PC-9 (cell line): ENCODE measurements at regions of chr15 and their contacts with region 1.

Region 1: GRCh38 chr15:78988361-78988911 is 43.6 kb upstream of the CTSH start:
- DNase-seq: peak; percentile 89 to 97
- H3K4me3 ChIP-seq: no peak overlapping the region
- H3K27ac ChIP-seq: peak overlapping the region; percentile 81
- H3K4me1 ChIP-seq: peaks cover 16% of the 10 kb centered on the region
- H3K27me3 ChIP-seq: no peaks in the 10 kb centered on the region
- CTCF ChIP-seq: no peak

Region 2: GRCh38 chr15:78909791-78910228 is 78.6 kb before region 1 on chr15:
- CTCF ChIA-PET with region 1: interaction called, 12 read pairs
- POLR2A ChIA-PET with region 1: no interaction called
- intact Hi-C with region 1: no loop called
- DNase-seq: no peak
- H3K4me3 ChIP-seq: no peak overlapping the region
- H3K27ac ChIP-seq: no peak overlapping the region
- H3K4me1 ChIP-seq: peaks cover 22% of the 10 kb centered on the region
- H3K27me3 ChIP-seq: no peaks in the 10 kb centered on the region
- CTCF ChIP-seq: peak; percentile 84

Region 3: DNA sequence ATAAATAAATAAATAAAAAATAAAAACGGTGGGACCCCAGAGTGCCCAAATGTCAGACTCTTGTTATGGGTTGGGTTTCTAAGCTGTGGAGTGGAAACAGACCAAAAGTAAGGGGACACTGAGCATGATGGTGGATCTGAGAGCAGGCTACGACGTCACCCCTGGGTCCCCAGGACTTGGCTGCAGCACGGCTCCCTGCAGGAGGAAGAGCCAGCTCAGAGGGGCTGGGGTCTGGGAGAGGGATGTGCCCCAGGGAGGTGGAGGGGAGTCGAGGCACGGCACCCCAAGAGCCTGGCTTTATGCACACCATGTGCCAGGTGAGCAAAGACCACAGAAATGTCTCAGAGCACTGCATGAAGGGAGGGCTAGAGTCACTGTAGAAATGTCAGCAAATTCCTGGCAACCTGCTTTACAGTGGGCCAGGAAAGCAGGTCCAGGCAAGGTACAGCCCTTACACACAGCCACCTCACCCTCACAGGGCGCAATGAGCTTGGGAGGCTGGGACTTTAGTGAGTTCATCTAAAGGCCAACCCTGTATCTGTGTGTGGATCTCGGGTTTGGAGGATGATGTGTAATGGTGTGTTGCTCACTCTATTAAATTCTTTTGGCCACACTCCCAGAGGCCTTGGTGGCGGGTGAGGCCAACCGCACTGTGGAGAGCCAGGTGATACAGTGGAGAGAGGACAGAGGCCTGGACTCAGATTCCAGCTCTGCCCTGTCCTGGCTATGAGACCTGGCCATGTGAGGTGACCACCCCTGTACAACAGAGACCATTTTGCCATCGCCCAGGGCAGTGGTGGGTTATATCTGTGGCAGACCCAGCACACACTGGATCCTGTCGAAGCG is 57.7 kb before region 1 on chr15:
- CTCF ChIA-PET with region 1: no interaction called
- POLR2A ChIA-PET with region 1: no interaction called
- intact Hi-C with region 1: loop called (anchors 2 kb)
- DNase-seq: peak; percentile 89 to 98
- H3K4me3 ChIP-seq: no peak overlapping the region
- H3K27ac ChIP-seq: peak overlapping the region; percentile 85
- H3K4me1 ChIP-seq: peaks cover 22% of the 10 kb centered on the region
- H3K27me3 ChIP-seq: no peaks in the 10 kb centered on the region
- CTCF ChIP-seq: no peak

Region 4: GRCh38 chr15:78944669-78945407 is 43.6 kb before region 1 on chr15 and contains the start of gene CTSH:
- CTCF ChIA-PET with region 1: no interaction called
- POLR2A ChIA-PET with region 1: no interaction called
- intact Hi-C with region 1: loop called (anchors 5 kb)
- DNase-seq: peak; percentile 60 to 83
- H3K4me3 ChIP-seq: peak within 1 kb of the TSS; percentile 58
- H3K27ac ChIP-seq: no peak within 1 kb of the TSS
- H3K4me1 ChIP-seq: peaks cover 29% of the 10 kb centered on the region
- H3K27me3 ChIP-seq: no peaks in the 10 kb centered on the region
- CTCF ChIP-seq: no peak
- total RNA-seq, gene CTSH: 101 and 128 TPM in 2 replicates

Region 5: DNA sequence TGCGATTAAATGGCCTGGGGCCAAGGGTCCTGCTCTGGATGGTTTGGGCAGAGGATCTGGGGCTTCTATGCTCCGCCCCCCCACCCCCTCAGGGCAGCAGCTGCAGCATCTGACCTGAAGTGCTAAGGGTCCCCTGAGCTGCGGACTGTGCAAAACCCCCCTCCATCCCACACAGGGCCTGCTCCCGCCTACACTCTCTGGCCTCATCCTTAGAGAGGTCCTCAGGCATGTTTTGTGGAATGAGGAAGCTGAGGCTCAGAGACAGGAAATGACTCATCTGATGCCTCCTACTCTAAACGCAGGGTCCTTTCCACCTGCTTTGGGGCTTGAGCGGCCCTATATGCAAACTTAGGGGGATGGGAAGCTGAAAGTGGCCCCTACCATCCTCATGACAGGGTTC is 15.9 kb after region 1 on chr15:
- CTCF ChIA-PET with region 1: interaction called, 14 read pairs
- POLR2A ChIA-PET with region 1: no interaction called
- intact Hi-C with region 1: no loop called
- DNase-seq: peak; percentile 64 to 88
- H3K4me3 ChIP-seq: no peak overlapping the region
- H3K27ac ChIP-seq: peak overlapping the region; percentile 74
- H3K4me1 ChIP-seq: peaks cover 27% of the 10 kb centered on the region
- H3K27me3 ChIP-seq: no peaks in the 10 kb centered on the region
- CTCF ChIP-seq: no peak

Region 6: GRCh38 chr15:79170256-79170664 is 181.8 kb after region 1 on chr15:
- CTCF ChIA-PET with region 1: no interaction called
- POLR2A ChIA-PET with region 1: no interaction called
- intact Hi-C with region 1: loop called (anchors 5 kb)
- DNase-seq: peak; percentile 71 to 91
- H3K4me3 ChIP-seq: peak overlapping the region; percentile 7; the same call in 1 of the 2 replicates
- H3K27ac ChIP-seq: peak overlapping the region; percentile 83
- H3K4me1 ChIP-seq: peaks cover 52% of the 10 kb centered on the region
- H3K27me3 ChIP-seq: no peaks in the 10 kb centered on the region
- CTCF ChIP-seq: no peak

Region 7: GRCh38 chr15:79296583-79296982 is 308.1 kb after region 1 on chr15:
- CTCF ChIA-PET with region 1: no interaction called
- POLR2A ChIA-PET with region 1: no interaction called
- intact Hi-C with region 1: no loop called
- DNase-seq: no peak
- H3K4me3 ChIP-seq: no peak overlapping the region
- H3K27ac ChIP-seq: no peak overlapping the region
- H3K4me1 ChIP-seq: no peaks in the 10 kb centered on the region
- H3K27me3 ChIP-seq: peaks cover 79% of the 10 kb centered on the region
- CTCF ChIP-seq: peak; percentile 43; the same call in 1 of the 2 replicates

Region 8: GRCh38 chr15:79641841-79642240 is 653.4 kb after region 1 on chr15:
- CTCF ChIA-PET with region 1: interaction called, 13 read pairs
- POLR2A ChIA-PET with region 1: no interaction called
- intact Hi-C with region 1: no loop called
- DNase-seq: no peak
- H3K4me3 ChIP-seq: no peak overlapping the region
- H3K27ac ChIP-seq: no peak overlapping the region
- H3K4me1 ChIP-seq: peaks cover 19% of the 10 kb centered on the region
- H3K27me3 ChIP-seq: no peaks in the 10 kb centered on the region
- CTCF ChIP-seq: no peak